ENCODE measurements at regions of chr4 and their contacts with region 1.

Region 1: GRCh38 chr4:47972181-47972580 is 44.3 kb downstream of the CNGA1 start:
- DNase-seq: no peak
- H3K4me3 ChIP-seq: no peak overlapping the region
- H3K27ac ChIP-seq: no peak overlapping the region
- H3K4me1 ChIP-seq: no peaks in the 10 kb centered on the region
- H3K27me3 ChIP-seq: no peaks in the 10 kb centered on the region
- CTCF ChIP-seq: no peak
- POLR2A ChIP-seq: no peak

Region 2: DNA sequence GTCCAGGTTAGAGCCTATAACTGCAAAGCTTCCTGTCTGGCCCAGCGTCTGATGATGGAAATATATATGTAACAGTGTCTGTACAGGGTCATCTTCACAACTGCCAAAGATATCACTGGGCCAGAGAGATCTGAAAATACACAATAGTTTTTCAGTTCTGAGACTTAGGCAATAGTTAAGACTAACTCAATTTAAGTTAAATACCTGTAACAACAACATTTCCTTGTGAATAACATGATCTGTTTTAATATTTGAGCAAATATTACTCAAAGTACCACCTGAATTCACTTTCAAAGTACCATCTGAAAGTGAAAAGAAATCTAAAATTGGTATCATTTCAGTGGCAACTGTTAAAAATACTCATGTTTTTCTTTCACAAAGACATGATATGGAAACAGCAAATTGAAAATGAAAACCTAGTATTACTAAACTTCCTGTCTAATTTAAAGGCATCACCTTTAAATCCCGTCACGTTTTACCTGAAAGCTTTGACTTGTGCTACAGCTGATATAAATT is 527.4 kb after region 1 on chr4:
- intact Hi-C with region 1: loop called (anchors 5 kb)
- DNase-seq: no peak
- H3K4me3 ChIP-seq: no peak overlapping the region
- H3K27ac ChIP-seq: no peak overlapping the region
- H3K4me1 ChIP-seq: no peaks in the 10 kb centered on the region
- H3K27me3 ChIP-seq: no peaks in the 10 kb centered on the region
- CTCF ChIP-seq: no peak
- POLR2A ChIP-seq: no peak